K562 (cell line): ENCODE measurements at regions of chr1 and their contacts with region 1.

Region 1: DNA sequence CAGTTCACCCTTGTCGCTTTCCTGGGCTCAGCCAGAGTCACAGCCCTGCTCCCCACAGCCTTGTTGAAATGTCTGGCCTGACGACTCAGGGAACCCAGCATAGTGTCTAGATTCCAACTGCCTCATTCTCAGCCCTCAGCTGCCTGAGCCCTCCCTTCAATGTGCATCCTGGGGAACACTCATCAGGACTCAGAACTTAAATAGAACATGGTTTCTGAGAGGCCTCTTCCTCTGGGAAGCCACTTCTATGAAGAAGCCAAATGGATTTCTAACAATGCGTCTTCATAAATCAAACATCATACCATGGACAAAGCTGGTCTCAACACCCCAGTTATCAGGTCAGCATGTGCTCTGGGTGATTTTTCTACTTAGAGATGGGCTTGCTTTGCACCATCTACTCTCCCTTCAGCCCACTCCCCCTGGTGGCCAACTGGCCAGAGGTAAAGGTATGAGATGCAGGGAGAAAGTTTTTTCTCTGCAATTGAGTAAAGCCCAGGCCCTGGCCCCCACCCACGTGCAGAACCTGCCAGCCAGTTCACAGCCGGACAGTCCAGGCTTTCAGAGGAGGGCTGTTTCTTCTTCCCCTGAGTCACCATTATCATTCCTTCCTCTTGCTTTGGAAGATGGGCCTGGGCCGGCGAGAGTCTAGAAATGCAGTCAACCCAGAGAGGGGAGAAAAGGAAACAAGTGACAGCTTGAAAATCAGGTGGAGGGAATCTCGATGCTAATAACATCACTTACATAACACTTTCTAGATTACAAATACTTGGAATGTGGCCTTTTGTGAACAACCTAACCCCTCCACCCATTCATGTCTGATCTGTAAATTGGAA is 32.1 kb downstream of the CD244 start:
- DNase-seq: peak; percentile 45 to 72 (median 62)
- ATAC-seq: peak; percentile 95
- H3K4me3 ChIP-seq: no peak overlapping the region
- H3K27ac ChIP-seq: no peak overlapping the region
- H3K4me1 ChIP-seq: no peaks in the 10 kb centered on the region
- H3K27me3 ChIP-seq: peaks cover 0 to 12% of the 10 kb centered on the region in 2 experiments; a peak in 2 of 5 replicates
- CTCF ChIP-seq: peak; percentile 76 to 81 (median 81)
- EP300 ChIP-seq: no peak
- POLR2A ChIP-seq: no peak
- RAD21 ChIP-seq: peak; percentile 73 to 74

Region 2: GRCh38 chr1:160779626-160780397 is 50.7 kb before region 1 on chr1:
- CTCF ChIA-PET with region 1: interaction called, 3 read pairs
- POLR2A ChIA-PET with region 1: no interaction called
- in situ Hi-C with region 1: no loop called
- intact Hi-C with region 1: loop called (anchors 1 kb)
- DNase-seq: peak; percentile 69 to 75 (median 72)
- ATAC-seq: peak; percentile 97
- H3K4me3 ChIP-seq: no peak overlapping the region
- H3K27ac ChIP-seq: no peak overlapping the region
- H3K4me1 ChIP-seq: no peaks in the 10 kb centered on the region
- H3K27me3 ChIP-seq: peaks cover 0 to 21% of the 10 kb centered on the region in 2 experiments; a peak in 1 of 5 replicates
- CTCF ChIP-seq: peak; percentile 90 to 98 (median 93)
- EP300 ChIP-seq: no peak
- POLR2A ChIP-seq: no peak
- RAD21 ChIP-seq: peak; percentile 14 to 65; a peak in 2 of 4 replicates